ENCODE measurements at regions of chr2 and their contacts with region 1.

Region 1: GRCh38 chr2:48343571-48344440 is 186.1 kb upstream of the STON1 start:
- DNase-seq: no peak
- H3K4me3 Mint-ChIP-seq: peak overlapping the region; percentile 17
- H3K27ac Mint-ChIP-seq: peak overlapping the region; percentile 46
- H3K4me1 Mint-ChIP-seq: peaks cover 42% of the 10 kb centered on the region
- H3K27me3 Mint-ChIP-seq: no peaks in the 10 kb centered on the region

Region 2: GRCh38 chr2:48233005-48233404 is 110.8 kb before region 1 on chr2:
- CTCF ChIA-PET with region 1: no interaction called
- POLR2A ChIA-PET with region 1: no interaction called
- intact Hi-C with region 1: loop called (anchors 1 kb)
- DNase-seq: peak; percentile 41
- H3K4me3 Mint-ChIP-seq: no peak overlapping the region
- H3K27ac Mint-ChIP-seq: peak overlapping the region; percentile 6
- H3K4me1 Mint-ChIP-seq: peaks cover 19% of the 10 kb centered on the region
- H3K27me3 Mint-ChIP-seq: no peaks in the 10 kb centered on the region

Region 3: DNA sequence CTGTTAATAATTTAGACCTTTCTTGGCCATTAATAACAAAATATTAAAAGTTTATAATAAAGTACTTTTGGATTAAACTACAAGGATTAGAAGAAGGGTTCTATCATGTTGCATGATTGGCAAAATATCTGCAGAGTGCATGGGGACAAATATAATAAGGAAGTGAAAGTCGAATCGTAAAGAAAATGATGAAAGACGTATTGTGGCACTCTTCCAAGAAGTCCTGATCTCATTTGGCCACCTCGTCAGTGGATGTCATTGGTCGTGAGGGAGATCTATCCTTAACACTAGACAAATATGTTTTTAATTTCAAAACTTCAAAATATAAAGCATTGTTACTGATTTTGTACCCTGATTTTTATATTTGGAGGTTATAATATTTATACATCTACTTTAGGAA is 11.5 kb before region 1 on chr2:
- CTCF ChIA-PET with region 1: no interaction called
- POLR2A ChIA-PET with region 1: no interaction called
- intact Hi-C with region 1: no loop called
- DNase-seq: no peak
- H3K4me3 Mint-ChIP-seq: no peak overlapping the region
- H3K27ac Mint-ChIP-seq: no peak overlapping the region
- H3K4me1 Mint-ChIP-seq: peaks cover 37% of the 10 kb centered on the region
- H3K27me3 Mint-ChIP-seq: no peaks in the 10 kb centered on the region

Region 4: GRCh38 chr2:48356701-48357325 is 13.0 kb after region 1 on chr2:
- CTCF ChIA-PET with region 1: no interaction called
- POLR2A ChIA-PET with region 1: no interaction called
- intact Hi-C with region 1: loop called (anchors 1 kb)
- DNase-seq: no peak
- H3K4me3 Mint-ChIP-seq: peak overlapping the region; percentile 41
- H3K27ac Mint-ChIP-seq: peak overlapping the region; percentile 85
- H3K4me1 Mint-ChIP-seq: peaks cover 56% of the 10 kb centered on the region
- H3K27me3 Mint-ChIP-seq: no peaks in the 10 kb centered on the region

Measured in activated CD4-positive, alpha-beta memory T cell treated with anti-CD3 and anti-CD28 coated beads for 36 hours (primary cell).